GM13977 (cell line): ENCODE measurements at regions of chr12 and their contacts with region 1.

Region 1: GRCh38 chr12:3261782-3262359 is 184.7 kb downstream of the TSPAN9 start:
- DNase-seq: no peak
- CTCF ChIP-seq: no peak

Region 2: DNA sequence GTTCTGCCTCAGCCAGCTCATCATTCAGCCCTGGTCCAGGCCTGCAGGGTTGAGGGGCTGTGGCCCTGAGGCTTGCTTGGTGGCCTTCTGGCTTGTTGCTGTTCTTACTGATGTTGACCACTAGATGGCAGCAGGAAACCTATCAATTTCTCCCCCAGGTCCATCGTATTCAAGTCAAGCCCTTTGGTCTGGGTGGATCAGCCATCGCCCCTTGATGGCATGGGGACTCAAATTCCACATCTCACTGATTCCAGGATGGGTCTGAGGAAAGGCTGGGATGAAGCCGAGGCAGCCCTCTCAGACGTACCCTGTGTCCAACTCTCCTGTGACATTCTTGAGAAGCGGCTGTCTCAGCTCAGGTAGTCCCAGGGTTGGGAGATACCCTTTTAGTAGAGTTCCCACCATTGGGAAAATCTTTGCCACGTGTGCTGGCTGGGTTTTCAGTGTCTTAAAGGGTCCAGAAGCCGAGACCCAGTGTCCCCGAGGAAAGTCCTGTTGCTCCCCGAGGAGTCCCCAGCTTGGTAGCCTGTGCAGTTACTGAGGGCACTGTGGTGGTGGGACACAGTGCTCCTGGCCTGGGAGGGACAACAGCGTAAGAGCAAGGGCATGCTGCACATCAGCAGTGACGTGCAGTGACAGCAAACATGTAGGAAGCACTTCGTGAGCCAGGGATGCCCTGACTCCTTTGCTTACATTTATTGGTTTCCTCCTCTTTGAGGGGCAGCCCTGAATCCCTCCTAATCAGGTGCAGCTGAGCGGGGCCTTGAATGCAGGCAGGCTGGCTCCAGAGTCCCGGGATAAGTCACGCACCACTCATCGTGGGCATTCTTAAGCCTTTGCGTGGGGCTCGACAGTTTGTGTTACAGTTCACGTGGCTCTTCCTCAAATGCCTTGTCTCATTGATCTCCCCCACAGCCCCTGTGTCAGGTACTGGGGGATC is 126.1 kb before region 1 on chr12:
- in situ Hi-C with region 1: loop called (anchors 10 kb)
- DNase-seq: peak; percentile 88
- CTCF ChIP-seq: peak; percentile 76

Region 3: GRCh38 chr12:4402996-4403395 is 1141.1 kb after region 1 on chr12:
- in situ Hi-C with region 1: no loop called
- DNase-seq: no peak
- CTCF ChIP-seq: no peak